Activated T-helper 1 cell treated with anti-CD3 and anti-CD28 coated beads, Interleukin-12 subunit alpha, Interleukin-12 subunit beta, Interleukin-2, Interleukin-4 antibody, amounts not matched to agents 30 ng/mL and 10 ng/mL and 1 ng/mL, durations not matched to agents 14 hours and 24 hours and 36 hours (primary cell): ENCODE measurements at regions of chr10 and their contacts with region 1.

Region 1: GRCh38 chr10:17228091-17228940 is at the start of gene VIM:
- DNase-seq: peak; percentile 81
- H3K4me3 Mint-ChIP-seq: peak within 1 kb of the TSS; percentile 92
- H3K27ac Mint-ChIP-seq: peak within 1 kb of the TSS; percentile 99
- H3K4me1 Mint-ChIP-seq: peaks cover 56% of the 10 kb centered on the region
- H3K27me3 Mint-ChIP-seq: peaks cover 2% of the 10 kb centered on the region
- total RNA-seq, gene VIM: 192 and 193 TPM in 2 replicates

Region 2: DNA sequence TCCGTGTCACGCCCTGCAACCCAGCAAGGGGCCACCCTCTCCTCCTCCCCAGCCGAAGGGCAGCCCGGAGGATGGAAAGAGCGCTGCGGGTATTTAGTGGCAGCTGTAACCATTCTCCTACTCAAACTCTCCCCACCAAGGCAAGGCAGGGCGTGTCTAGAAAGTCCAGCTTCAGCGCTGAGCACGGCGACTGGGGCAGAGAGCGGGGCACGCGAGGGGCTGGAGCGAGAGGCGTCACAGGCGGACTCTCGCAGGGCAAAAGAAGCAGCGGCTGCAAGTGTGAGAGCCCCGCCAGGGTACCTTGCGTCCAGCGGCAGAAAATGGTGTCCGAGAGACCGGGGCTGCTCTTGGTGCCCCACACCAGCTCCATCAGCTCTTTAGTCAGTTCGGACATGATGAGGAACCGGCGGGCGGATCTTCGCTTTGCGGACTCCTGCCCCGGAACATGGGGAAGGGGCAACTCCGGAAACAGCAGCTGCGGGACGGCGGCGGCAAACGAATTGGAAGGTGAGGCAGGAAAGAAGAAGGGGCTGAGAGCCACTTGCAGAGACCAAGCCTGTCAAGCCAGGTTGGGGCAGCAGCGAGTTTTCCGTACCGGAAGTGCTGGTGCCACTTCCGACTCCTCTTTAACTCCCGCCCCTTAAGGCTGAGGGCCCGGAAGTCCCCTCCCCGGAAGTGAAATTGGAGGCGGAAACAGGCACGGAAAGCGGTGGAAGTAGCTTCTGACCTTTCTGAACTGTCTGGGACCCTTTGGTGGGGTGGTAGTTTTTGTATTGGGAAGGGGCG is 1368.2 kb before region 1 on chr10 and contains the start of gene MINDY3:
- intact Hi-C with region 1: loop called (anchors 1 kb)
- DNase-seq: peak; percentile 66
- H3K4me3 Mint-ChIP-seq: peak within 1 kb of the TSS; percentile 99
- H3K27ac Mint-ChIP-seq: peak within 1 kb of the TSS; percentile 93
- H3K4me1 Mint-ChIP-seq: peaks cover 36% of the 10 kb centered on the region
- H3K27me3 Mint-ChIP-seq: peaks cover 19% of the 10 kb centered on the region
- total RNA-seq, gene MINDY3: 14.5 and 16.2 TPM in 2 replicates

Region 3: DNA sequence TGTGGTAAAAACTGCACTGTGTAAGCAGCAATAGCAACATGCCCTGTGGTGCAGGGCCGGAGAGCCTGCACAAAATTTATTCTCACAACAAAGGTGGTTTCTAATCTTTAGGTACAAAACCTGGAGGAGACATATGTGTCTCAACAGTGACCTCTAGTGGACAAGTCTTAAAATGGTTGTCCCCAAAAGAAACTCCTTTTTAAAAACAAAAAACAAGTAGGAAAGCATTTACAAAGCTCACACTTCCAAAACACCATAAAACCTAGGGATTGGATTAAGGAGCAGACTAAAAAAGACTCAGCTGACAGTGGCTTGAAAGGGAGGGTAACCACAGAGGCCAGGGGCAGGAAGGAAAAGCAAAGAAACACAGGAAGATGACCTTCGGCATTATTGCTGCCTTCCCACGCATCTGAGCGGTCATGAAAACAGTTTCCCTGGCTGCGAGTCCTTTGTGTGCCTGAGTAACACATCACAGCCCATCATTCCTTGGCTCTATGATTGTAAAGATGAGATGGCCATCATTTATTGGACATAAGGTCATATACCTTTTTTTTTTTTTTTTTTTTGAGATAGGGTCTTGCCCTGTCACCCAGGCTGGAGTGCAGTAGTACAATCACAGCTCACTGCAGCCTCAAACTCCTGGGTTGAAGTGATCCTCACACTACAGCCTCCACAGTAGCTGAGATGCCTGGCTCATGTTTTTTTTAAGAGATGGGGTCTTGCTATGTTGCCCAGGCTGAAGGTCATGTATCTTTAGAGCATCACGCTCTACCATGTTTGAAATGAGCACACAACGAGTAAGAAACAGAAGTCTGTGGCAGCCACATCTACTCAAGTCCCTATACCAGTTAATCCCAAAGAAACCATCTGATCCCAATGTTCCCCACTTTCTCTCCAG is 450.6 kb before region 1 on chr10:
- intact Hi-C with region 1: loop called (anchors 2 kb)
- DNase-seq: no peak
- H3K4me3 Mint-ChIP-seq: no peak overlapping the region
- H3K27ac Mint-ChIP-seq: peak overlapping the region; percentile 62
- H3K4me1 Mint-ChIP-seq: peaks cover 24% of the 10 kb centered on the region
- H3K27me3 Mint-ChIP-seq: no peaks in the 10 kb centered on the region

Region 4: GRCh38 chr10:16891375-16892313 is 336.7 kb before region 1 on chr10:
- intact Hi-C with region 1: loop called (anchors 5 kb)
- DNase-seq: no peak
- H3K4me3 Mint-ChIP-seq: no peak overlapping the region
- H3K27ac Mint-ChIP-seq: no peak overlapping the region
- H3K4me1 Mint-ChIP-seq: peaks cover 10% of the 10 kb centered on the region
- H3K27me3 Mint-ChIP-seq: peaks cover 9% of the 10 kb centered on the region

Region 5: DNA sequence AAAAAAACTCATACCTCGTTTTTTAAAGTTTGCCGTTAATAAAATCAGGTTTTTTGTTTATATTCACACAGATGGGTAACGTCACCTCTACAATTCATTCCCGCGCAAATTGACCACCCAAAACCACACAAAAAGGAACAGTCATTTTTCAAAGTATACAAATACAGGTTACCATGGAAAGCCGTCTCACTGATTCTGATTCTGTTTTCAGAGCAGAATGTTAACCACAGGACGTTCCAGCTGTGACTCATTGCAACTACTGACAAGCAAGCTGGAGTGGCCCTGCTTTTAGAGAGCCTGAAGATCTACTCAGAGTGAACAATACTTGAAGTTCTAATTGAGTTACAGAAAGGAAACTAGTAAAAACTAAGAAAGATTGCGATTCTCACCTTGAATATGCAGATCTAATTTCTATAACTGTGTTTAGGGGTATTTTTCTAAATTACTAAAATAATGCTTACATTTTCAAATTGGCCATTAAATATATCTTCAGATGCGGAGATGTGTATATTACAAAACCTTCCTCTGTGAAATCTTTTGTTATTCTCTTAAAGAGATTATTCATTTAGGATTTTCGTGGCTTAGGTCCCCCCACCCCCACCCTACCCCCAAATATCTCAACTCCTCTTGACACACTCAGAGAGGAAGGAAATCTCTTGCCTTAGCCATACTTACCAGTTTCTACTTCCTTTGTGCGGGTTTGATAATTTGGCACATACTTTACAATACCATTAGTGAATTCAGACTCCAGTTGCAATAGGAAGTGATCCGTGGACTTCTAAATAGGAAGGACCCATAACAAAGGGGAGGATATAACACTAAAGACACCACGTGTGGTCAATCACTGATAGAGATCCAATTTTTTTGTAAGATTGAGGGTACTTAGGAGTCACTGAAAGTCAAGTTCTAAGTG is 204.7 kb before region 1 on chr10:
- intact Hi-C with region 1: loop called (anchors 1 kb)
- DNase-seq: peak; percentile 77
- H3K4me3 Mint-ChIP-seq: peak overlapping the region; percentile 61
- H3K27ac Mint-ChIP-seq: peak overlapping the region; percentile 99
- H3K4me1 Mint-ChIP-seq: peaks cover 61% of the 10 kb centered on the region
- H3K27me3 Mint-ChIP-seq: peaks cover 4% of the 10 kb centered on the region

Region 6: GRCh38 chr10:17200912-17201793 is 27.2 kb before region 1 on chr10 and contains the start of gene TRDMT1:
- intact Hi-C with region 1: loop called (anchors 1 kb)
- DNase-seq: peak; percentile 78
- H3K4me3 Mint-ChIP-seq: peak within 1 kb of the TSS; percentile 84
- H3K27ac Mint-ChIP-seq: peak within 1 kb of the TSS; percentile 77
- H3K4me1 Mint-ChIP-seq: peaks cover 27% of the 10 kb centered on the region
- H3K27me3 Mint-ChIP-seq: peaks cover 2% of the 10 kb centered on the region
- total RNA-seq, gene TRDMT1: 3.3 and 4.2 TPM in 2 replicates

Region 7: GRCh38 chr10:17443707-17444387 is 215.5 kb after region 1 on chr10:
- intact Hi-C with region 1: loop called (anchors 2 kb)
- DNase-seq: peak; percentile 19
- H3K4me3 Mint-ChIP-seq: peak overlapping the region; percentile 50
- H3K27ac Mint-ChIP-seq: no peak overlapping the region
- H3K4me1 Mint-ChIP-seq: peaks cover 21% of the 10 kb centered on the region
- H3K27me3 Mint-ChIP-seq: peaks cover 8% of the 10 kb centered on the region